ENCODE measurements at regions of chr9 and their contacts with region 1.

Region 1: GRCh38 chr9:99184475-99185347 is 37.0 kb downstream of the ALG2 start:
- DNase-seq: peak; percentile 88
- ATAC-seq: peak; percentile 90
- H3K4me3 Mint-ChIP-seq: no peak overlapping the region
- H3K27ac Mint-ChIP-seq: no peak overlapping the region
- H3K4me1 Mint-ChIP-seq: peaks cover 17% of the 10 kb centered on the region
- H3K27me3 Mint-ChIP-seq: no peaks in the 10 kb centered on the region; the same call in 1 of the 2 replicates
- CTCF ChIP-seq: peak; percentile 88

Region 2: GRCh38 chr9:99019790-99020331 is 164.8 kb before region 1 on chr9:
- CTCF ChIA-PET with region 1: no interaction called
- POLR2A ChIA-PET with region 1: no interaction called
- DNase-seq: no peak
- ATAC-seq: no peak
- H3K4me3 Mint-ChIP-seq: no peak overlapping the region
- H3K27ac Mint-ChIP-seq: no peak overlapping the region
- H3K4me1 Mint-ChIP-seq: no peaks in the 10 kb centered on the region
- H3K27me3 Mint-ChIP-seq: no peaks in the 10 kb centered on the region; the same call in none of the 2 replicates
- CTCF ChIP-seq: no peak

Region 3: DNA sequence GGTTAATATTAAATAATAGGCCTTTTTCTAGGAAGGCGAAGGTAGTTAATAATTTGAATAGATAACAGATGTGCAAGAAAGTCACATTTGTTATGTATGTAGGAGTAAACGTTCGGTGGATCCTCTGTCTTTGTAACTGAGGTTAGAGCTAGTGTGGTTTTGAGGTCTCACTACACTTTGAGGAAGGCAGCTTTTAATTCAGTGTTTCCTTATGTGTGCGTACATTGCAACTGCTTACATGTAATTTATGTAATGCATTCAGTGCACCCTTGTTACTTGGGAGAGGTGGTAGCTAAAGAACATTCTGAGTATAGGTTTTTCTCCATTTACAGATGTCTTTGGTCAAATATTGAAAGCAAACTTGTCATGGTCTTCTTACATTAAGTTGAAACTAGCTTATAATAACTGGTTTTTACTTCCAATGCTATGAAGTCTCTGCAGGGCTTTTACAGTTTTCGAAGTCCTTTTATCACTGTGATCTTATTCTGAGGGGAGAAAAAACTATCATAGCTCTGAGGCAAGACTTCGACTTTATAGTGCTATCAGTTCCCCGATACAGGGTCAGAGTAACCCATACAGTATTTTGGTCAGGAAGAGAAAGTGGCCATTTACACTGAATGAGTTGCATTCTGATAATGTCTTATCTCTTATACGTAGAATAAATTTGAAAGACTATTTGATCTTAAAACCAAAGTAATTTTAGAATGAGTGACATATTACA is 34.1 kb before region 1 on chr9:
- CTCF ChIA-PET with region 1: no interaction called
- POLR2A ChIA-PET with region 1: no interaction called
- DNase-seq: no peak
- ATAC-seq: no peak
- H3K4me3 Mint-ChIP-seq: no peak overlapping the region
- H3K27ac Mint-ChIP-seq: no peak overlapping the region
- H3K4me1 Mint-ChIP-seq: peaks cover 11% of the 10 kb centered on the region
- H3K27me3 Mint-ChIP-seq: no peaks in the 10 kb centered on the region
- CTCF ChIP-seq: no peak

Region 4: GRCh38 chr9:99173570-99174504 is 10.9 kb before region 1 on chr9:
- CTCF ChIA-PET with region 1: interaction called, 13 read pairs
- POLR2A ChIA-PET with region 1: no interaction called
- DNase-seq: no peak
- ATAC-seq: no peak
- H3K4me3 Mint-ChIP-seq: no peak overlapping the region
- H3K27ac Mint-ChIP-seq: no peak overlapping the region
- H3K4me1 Mint-ChIP-seq: peaks cover 59% of the 10 kb centered on the region
- H3K27me3 Mint-ChIP-seq: peaks cover 15% of the 10 kb centered on the region
- CTCF ChIP-seq: no peak

Region 5: DNA sequence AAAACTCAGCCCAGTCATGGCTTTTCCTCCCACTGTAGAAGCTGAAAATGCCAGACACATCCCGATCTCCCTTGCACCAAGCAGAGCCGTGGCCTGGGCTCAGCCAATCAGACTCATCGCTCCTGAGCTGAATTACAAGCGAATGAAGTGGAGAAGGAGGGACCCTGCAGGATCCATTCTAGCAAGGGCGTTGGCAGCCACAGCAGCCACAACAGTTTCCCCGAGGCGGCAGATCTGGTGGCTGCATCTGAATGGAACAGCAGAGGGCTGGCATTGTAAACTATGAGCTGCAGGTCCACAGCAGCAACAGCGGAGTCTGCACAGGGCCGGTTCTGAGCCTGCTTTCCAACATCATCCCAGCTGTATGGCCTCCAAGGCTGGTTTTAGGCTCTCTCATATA is 13.3 kb after region 1 on chr9:
- CTCF ChIA-PET with region 1: interaction called, 33 read pairs
- POLR2A ChIA-PET with region 1: no interaction called
- DNase-seq: peak; percentile 16
- ATAC-seq: peak; percentile 87
- H3K4me3 Mint-ChIP-seq: no peak overlapping the region
- H3K27ac Mint-ChIP-seq: no peak overlapping the region
- H3K4me1 Mint-ChIP-seq: peaks cover 9% of the 10 kb centered on the region; the same call in 1 of the 2 replicates
- H3K27me3 Mint-ChIP-seq: no peaks in the 10 kb centered on the region
- CTCF ChIP-seq: no peak

Region 6: DNA sequence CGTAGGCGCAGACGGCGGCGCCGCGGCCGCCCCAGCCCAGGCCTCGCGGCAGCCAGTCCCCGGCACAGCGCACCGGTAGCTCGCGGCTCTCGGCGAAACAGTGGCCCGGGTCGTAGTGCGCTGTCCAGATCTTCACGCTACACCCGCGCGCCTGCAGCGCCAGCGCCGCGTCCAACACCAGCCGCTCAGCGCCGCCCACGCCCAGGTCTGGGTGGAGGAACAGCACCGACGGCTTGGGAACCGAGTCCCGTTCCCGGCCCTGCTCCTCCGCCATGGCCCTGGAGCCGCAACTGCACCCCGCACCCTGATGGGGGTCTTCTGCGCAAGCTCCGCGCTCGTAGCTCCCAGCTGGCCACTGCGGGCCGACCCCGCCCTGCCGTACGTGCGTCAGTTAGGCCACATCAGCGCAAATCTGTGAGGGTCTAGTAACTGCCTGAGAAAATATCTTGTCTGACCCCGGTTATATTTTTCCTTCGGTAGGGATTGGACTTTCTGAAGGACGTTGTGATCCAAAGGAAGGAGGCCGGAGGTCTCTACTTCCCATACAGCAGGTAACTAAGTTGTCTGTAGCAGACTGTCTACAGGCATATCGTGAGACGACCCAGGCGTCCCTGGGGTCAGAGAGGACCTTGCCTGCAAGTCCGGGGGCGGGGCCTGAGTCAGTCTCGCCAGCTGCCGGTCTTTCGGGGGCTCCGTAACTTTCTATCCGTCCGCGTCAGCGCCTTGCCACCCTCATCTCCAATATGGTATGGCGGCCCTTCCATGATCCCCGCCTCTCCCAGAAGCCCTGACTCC is 37.1 kb after region 1 on chr9 and contains the starts of genes ALG2 and SEC61B:
- CTCF ChIA-PET with region 1: interaction called, 13 read pairs
- POLR2A ChIA-PET with region 1: interaction called, 11 read pairs
- DNase-seq: peak; percentile 93
- ATAC-seq: peak; percentile 94
- H3K4me3 Mint-ChIP-seq: peak within 1 kb of the TSS; percentile 95
- H3K27ac Mint-ChIP-seq: peak within 1 kb of the TSS; percentile 100
- H3K4me1 Mint-ChIP-seq: peaks cover 29% of the 10 kb centered on the region
- H3K27me3 Mint-ChIP-seq: no peaks in the 10 kb centered on the region
- CTCF ChIP-seq: no peak
- total RNA-seq, gene ALG2: 24.0 to 25.2 TPM (median 25.0 TPM) in 3 replicates
- total RNA-seq, gene SEC61B: 153 to 167 TPM (median 156 TPM) in 3 replicates

Region 7: GRCh38 chr9:99231711-99232110 is 47.0 kb after region 1 on chr9:
- CTCF ChIA-PET with region 1: interaction called, 20 read pairs
- POLR2A ChIA-PET with region 1: no interaction called
- DNase-seq: peak; percentile 49
- ATAC-seq: peak; percentile 65; the same call in 1 of the 2 replicates
- H3K4me3 Mint-ChIP-seq: no peak overlapping the region
- H3K27ac Mint-ChIP-seq: no peak overlapping the region
- H3K4me1 Mint-ChIP-seq: no peaks in the 10 kb centered on the region
- H3K27me3 Mint-ChIP-seq: no peaks in the 10 kb centered on the region
- CTCF ChIP-seq: peak; percentile 43; the same call in 1 of the 2 replicates

Measured in WTC11 (cell line).